ENCODE measurements at regions of chr12 and their contacts with region 1.

Region 1: DNA sequence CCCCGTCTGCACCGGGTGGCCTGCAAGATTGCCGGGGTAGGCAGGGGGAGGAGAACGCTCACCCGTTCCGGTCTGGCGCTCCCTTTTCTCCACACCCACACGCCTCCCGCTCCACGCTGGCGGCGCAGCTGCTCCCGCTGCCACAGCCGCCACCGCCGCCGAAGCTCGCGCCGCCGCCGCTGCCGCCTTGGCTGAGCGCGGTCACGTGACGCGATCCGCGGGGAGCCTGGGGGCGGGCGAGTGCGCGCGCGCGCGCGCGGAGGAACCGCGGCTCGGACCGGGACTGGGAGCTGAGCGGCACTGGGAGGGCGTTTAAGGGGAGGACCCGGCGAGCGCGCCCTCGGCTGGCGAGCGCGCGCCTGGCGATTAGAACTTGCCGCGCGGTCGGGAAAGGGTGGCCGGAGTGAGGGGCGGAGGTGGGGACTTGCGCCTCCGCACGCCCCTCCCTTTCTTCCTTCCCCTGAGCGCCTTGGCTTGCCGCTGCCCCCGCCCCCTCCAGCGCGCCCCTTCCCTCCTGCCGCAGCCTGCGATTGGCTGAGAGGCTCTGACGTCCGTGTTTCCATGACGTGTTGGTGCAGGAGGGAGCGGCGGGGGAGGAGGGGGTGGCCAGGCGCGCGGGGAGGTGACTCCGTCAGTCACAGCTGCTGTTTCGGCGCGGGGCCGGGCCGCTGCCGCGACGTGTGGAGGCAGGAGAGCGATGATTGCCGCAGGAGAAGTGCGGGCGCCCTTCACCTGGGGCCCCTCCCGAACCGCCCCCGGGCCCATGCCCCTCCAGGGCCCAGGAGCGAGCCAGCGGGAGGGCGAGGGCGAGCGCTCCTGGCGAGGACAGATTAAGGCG is 738 bp upstream of the ATP2B1 start:
- DNase-seq: peak; percentile 98 to 99
- H3K4me3 ChIP-seq: peak overlapping the region; percentile 98
- H3K4me3 Mint-ChIP-seq: peak overlapping the region; percentile 79
- H3K27ac Mint-ChIP-seq: peak overlapping the region; percentile 91
- H3K4me1 ChIP-seq: peaks cover 11% of the 10 kb centered on the region; the same call in 1 of the 2 replicates
- H3K4me1 Mint-ChIP-seq: peaks cover 18% of the 10 kb centered on the region
- H3K27me3 ChIP-seq: no peaks in the 10 kb centered on the region
- H3K27me3 Mint-ChIP-seq: no peaks in the 10 kb centered on the region
- CTCF ChIP-seq: no peak

Region 2: DNA sequence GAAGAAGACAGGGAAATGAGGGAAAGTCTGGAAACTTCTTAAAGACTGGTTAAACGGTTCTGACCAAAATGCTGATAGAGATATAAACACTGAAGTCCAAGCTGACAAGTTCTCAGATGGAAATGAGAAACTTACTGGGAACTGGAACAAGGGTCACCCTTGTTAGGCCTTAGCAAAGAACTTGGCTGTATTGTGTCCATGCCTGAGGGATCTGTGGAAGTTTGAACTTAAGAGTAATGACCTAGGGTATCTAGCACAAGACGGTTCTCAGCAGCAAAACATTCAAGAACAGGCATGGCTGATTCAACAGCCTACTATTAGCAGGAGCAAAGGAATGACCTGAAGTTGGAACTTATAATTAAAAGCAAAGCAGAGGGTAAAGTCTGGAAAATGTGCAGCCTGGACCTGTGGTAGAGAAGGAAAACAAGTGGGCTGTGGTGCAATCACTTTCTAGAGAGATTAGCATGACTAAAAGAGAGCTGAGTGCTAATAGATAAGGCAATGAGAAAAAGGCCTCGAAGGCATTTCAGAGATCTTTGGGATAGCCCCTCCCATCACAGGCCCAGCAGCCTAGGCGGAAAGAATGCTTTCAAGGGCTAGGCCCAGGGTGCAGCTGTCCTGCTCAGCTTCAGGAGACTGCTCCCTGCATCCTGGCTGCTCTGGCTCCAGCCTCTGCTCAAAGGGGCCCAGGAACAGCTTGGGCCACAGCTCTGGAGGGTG is 61.0 kb before region 1 on chr12:
- CTCF ChIA-PET with region 1: no interaction called
- POLR2A ChIA-PET with region 1: no interaction called
- intact Hi-C with region 1: loop called (anchors 1 kb)
- DNase-seq: peak; percentile 79 to 87
- H3K4me3 ChIP-seq: no peak overlapping the region
- H3K4me3 Mint-ChIP-seq: peak overlapping the region; percentile 16
- H3K27ac Mint-ChIP-seq: peak overlapping the region; percentile 48
- H3K4me1 ChIP-seq: peaks cover 63% of the 10 kb centered on the region
- H3K4me1 Mint-ChIP-seq: peaks cover 52% of the 10 kb centered on the region
- H3K27me3 ChIP-seq: no peaks in the 10 kb centered on the region
- H3K27me3 Mint-ChIP-seq: no peaks in the 10 kb centered on the region
- CTCF ChIP-seq: no peak

Region 3: GRCh38 chr12:89775063-89775985 is 65.9 kb after region 1 on chr12:
- CTCF ChIA-PET with region 1: no interaction called
- POLR2A ChIA-PET with region 1: interaction called, 7 read pairs
- intact Hi-C with region 1: loop called (anchors 2 kb)
- DNase-seq: peak; percentile 74 to 77
- H3K4me3 ChIP-seq: no peak overlapping the region
- H3K4me3 Mint-ChIP-seq: peak overlapping the region; percentile 41
- H3K27ac Mint-ChIP-seq: peak overlapping the region; percentile 72
- H3K4me1 ChIP-seq: peaks cover 47% of the 10 kb centered on the region
- H3K4me1 Mint-ChIP-seq: peaks cover 41% of the 10 kb centered on the region
- H3K27me3 ChIP-seq: no peaks in the 10 kb centered on the region
- H3K27me3 Mint-ChIP-seq: no peaks in the 10 kb centered on the region
- CTCF ChIP-seq: no peak

Region 4: DNA sequence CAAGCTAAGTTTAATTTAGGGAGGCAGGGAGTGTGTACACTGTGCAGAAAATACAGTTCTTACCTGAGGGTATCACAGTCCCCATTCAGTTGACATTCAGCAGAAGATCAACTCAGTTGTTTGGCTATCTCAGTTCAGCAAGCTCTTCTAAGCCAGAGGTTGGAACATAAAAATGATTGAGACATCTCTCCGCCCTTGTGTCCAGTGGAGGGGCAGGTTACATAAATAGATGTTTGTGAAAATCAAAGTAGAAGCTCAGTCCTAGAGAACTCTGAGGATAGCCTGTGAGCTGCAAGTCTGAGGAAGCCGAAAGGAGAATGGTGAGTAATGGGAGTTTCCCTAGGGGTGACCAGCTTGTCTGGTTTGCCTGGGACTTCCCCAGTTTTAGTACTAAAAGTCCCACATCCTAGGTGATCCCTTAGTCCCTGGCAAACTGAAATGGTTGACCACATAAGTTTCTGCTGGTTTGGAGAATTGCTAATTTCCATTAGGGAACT is 250.7 kb after region 1 on chr12:
- CTCF ChIA-PET with region 1: no interaction called
- POLR2A ChIA-PET with region 1: no interaction called
- intact Hi-C with region 1: loop called (anchors 5 kb)
- DNase-seq: no peak
- H3K4me3 ChIP-seq: no peak overlapping the region
- H3K4me3 Mint-ChIP-seq: no peak overlapping the region
- H3K27ac Mint-ChIP-seq: no peak overlapping the region
- H3K4me1 ChIP-seq: no peaks in the 10 kb centered on the region
- H3K4me1 Mint-ChIP-seq: peaks cover 6% of the 10 kb centered on the region
- H3K27me3 ChIP-seq: no peaks in the 10 kb centered on the region
- H3K27me3 Mint-ChIP-seq: no peaks in the 10 kb centered on the region
- CTCF ChIP-seq: no peak

Region 5: DNA sequence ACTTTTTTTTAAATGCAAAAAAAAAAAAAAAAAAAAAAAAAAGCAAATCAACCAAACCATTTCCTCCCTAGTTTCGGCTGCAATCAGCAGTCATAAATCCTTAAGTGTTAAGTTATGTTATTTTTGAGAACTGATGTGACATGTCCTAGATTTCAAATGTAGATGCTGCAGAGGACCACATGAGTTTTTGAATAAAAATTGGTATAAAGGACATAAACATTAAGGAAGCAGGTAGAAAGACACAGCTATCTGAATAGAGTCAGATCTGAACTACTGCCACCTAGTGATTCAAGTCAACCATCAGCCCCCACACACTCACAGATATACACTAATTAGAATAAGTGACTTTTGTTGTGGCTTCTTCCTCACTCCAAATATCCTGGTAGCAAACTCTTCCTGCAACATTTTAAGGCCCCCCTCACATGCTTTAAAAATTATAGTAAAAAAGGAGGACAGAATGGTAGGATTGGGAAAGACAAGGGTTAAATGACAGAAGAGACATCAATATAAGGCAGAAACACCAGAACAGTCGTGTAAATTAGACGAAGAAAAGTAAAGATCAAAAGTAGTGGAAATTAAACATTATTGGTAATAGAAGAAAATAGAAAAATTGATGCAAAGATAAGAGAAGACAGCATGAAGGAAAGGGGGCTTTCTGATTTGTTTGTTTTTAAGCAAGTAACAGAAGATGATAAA is 393.7 kb after region 1 on chr12:
- CTCF ChIA-PET with region 1: no interaction called
- POLR2A ChIA-PET with region 1: no interaction called
- intact Hi-C with region 1: loop called (anchors 5 kb)
- DNase-seq: peak in 1 of 2 experiments; percentile 32
- H3K4me3 ChIP-seq: no peak overlapping the region
- H3K4me3 Mint-ChIP-seq: no peak overlapping the region
- H3K27ac Mint-ChIP-seq: no peak overlapping the region
- H3K4me1 ChIP-seq: no peaks in the 10 kb centered on the region
- H3K4me1 Mint-ChIP-seq: peaks cover 20% of the 10 kb centered on the region
- H3K27me3 ChIP-seq: no peaks in the 10 kb centered on the region
- H3K27me3 Mint-ChIP-seq: no peaks in the 10 kb centered on the region
- CTCF ChIP-seq: peak; percentile 28 to 49

Measured in Caco-2 (cell line).